Activated CD4-positive, alpha-beta memory T cell treated with anti-CD3 and anti-CD28 coated beads for 36 hours (primary cell): ENCODE measurements at regions of chr6 and their contacts with region 1.

Region 1: GRCh38 chr6:87808005-87808757 is 106.1 kb upstream of the AKIRIN2 start:
- DNase-seq: peak; percentile 17
- H3K4me3 Mint-ChIP-seq: no peak overlapping the region
- H3K27ac Mint-ChIP-seq: peak overlapping the region; percentile 89
- H3K4me1 Mint-ChIP-seq: peaks cover 34% of the 10 kb centered on the region
- H3K27me3 Mint-ChIP-seq: peaks cover 17% of the 10 kb centered on the region

Region 2: GRCh38 chr6:87589693-87590549 is 218.3 kb before region 1 on chr6 and contains the starts of genes ORC3 and RARS2:
- CTCF ChIA-PET with region 1: no interaction called
- POLR2A ChIA-PET with region 1: no interaction called
- intact Hi-C with region 1: loop called (anchors 5 kb)
- DNase-seq: peak; percentile 98
- H3K4me3 Mint-ChIP-seq: peak within 1 kb of the TSS; percentile 85
- H3K27ac Mint-ChIP-seq: peak within 1 kb of the TSS; percentile 79
- H3K4me1 Mint-ChIP-seq: peaks cover 49% of the 10 kb centered on the region
- H3K27me3 Mint-ChIP-seq: no peaks in the 10 kb centered on the region
- total RNA-seq, gene ORC3: 35.0 to 38.7 TPM
- total RNA-seq, gene RARS2: 20.0 to 20.8 TPM

Region 3: GRCh38 chr6:87825821-87826221 is 17.6 kb after region 1 on chr6:
- CTCF ChIA-PET with region 1: interaction called, 9 read pairs
- POLR2A ChIA-PET with region 1: no interaction called
- intact Hi-C with region 1: loop called (anchors 1 kb)
- DNase-seq: no peak
- H3K4me3 Mint-ChIP-seq: no peak overlapping the region
- H3K27ac Mint-ChIP-seq: no peak overlapping the region
- H3K4me1 Mint-ChIP-seq: peaks cover 19% of the 10 kb centered on the region
- H3K27me3 Mint-ChIP-seq: no peaks in the 10 kb centered on the region

Region 4: GRCh38 chr6:87909849-87910248 is 101.7 kb after region 1 on chr6:
- CTCF ChIA-PET with region 1: no interaction called
- POLR2A ChIA-PET with region 1: no interaction called
- intact Hi-C with region 1: loop called (anchors 2 kb)
- DNase-seq: peak; percentile 41
- H3K4me3 Mint-ChIP-seq: no peak overlapping the region
- H3K27ac Mint-ChIP-seq: no peak overlapping the region
- H3K4me1 Mint-ChIP-seq: peaks cover 26% of the 10 kb centered on the region
- H3K27me3 Mint-ChIP-seq: peaks cover 24% of the 10 kb centered on the region